AG04450 (cell line): ENCODE measurements at regions of chr12 and their contacts with region 1.

Region 1: DNA sequence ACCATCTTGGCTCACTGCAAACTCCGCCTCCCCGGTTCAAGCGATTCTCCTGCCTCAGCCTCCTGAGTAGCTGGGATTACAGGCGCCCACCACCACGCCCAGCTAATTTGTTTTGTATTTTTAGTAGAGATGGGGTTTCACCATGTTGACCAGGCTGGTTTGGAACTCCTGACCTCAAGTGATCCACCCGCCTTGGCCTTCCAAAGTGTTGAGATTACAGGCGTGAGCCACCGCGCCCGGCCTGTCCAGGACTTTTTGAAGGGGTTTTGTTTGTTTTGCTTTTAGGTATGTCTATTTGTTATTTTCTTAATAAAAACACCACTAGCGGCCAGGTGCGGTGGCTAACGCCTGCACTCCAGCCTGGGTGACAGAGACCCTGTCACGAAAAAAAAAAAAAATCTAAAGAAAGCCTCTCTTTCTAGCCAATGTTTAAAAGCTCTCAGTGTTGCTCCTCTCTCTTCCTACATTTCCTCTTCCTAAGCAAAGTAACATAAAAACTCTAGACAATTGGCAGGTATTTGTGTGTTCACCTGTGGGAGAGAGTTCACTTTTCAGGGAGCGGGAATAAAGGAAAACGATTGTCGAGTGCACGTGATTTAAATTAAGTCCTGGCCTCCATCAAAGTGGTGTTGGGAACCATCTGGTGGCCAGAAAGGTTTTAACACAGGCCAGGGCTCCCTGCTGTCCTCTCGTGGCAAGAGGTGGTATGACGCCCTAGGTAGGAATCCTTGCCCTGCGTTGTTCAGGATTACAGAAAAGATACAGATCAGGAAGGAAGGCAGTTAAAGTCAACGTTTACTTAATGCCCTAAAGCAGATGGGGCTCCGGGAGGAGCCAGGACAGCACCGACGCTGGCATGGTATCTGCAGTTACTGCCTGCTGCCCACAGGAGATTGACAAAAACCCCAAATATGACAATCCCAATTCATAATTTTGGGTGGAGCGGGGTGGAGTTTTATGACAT is 36.2 kb upstream of the ATP23 start:
- DNase-seq: peak; percentile 73
- H3K4me3 ChIP-seq: no peak overlapping the region
- H3K27ac ChIP-seq: no peak overlapping the region
- H3K27me3 ChIP-seq: peaks cover 19% of the 10 kb centered on the region
- CTCF ChIP-seq: peak; percentile 100

Region 2: DNA sequence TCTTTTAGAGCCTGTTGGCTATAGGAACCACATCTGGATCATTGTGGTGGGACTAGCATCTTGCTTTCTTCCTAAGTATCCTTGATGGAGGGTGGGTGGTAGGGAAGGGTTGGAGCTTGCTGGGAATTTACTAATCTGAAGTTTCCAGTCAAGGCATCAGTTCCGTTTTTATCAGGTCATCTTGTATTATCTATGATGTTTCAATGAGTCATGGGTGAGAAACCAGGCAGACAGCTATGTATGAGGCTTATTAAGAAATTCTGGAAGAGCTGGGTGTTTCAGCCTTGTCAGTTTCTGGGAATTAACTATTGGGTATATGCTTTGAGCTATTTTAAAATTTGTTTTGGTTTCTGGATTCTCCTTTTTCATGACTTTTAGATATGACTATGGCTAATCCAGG is 111.2 kb before region 1 on chr12:
- CTCF ChIA-PET with region 1: interaction called, 14 read pairs
- POLR2A ChIA-PET with region 1: no interaction called
- DNase-seq: no peak
- H3K4me3 ChIP-seq: no peak overlapping the region
- H3K27ac ChIP-seq: no peak overlapping the region
- H3K27me3 ChIP-seq: no peaks in the 10 kb centered on the region
- CTCF ChIP-seq: no peak

Region 3: GRCh38 chr12:57815177-57816000 is 89.7 kb before region 1 on chr12:
- CTCF ChIA-PET with region 1: interaction called, 14 read pairs
- POLR2A ChIA-PET with region 1: no interaction called
- DNase-seq: no peak
- H3K4me3 ChIP-seq: no peak overlapping the region
- H3K27ac ChIP-seq: no peak overlapping the region
- H3K27me3 ChIP-seq: no peaks in the 10 kb centered on the region
- CTCF ChIP-seq: peak; percentile 21; the same call in 1 of the 2 replicates

Region 4: GRCh38 chr12:57836442-57837375 is 68.4 kb before region 1 on chr12:
- CTCF ChIA-PET with region 1: interaction called, 44 read pairs
- POLR2A ChIA-PET with region 1: interaction called, 5 read pairs
- DNase-seq: peak; percentile 46
- H3K4me3 ChIP-seq: peak overlapping the region; percentile 45
- H3K27ac ChIP-seq: peak overlapping the region; percentile 48
- H3K27me3 ChIP-seq: no peaks in the 10 kb centered on the region
- CTCF ChIP-seq: no peak